Activated CD4-positive, alpha-beta T cell treated with anti-CD3 and anti-CD28 coated beads, Interleukin-2, amount 10 ng/mL, durations not matched to agents 7 days and 5 days (primary cell): ENCODE measurements at regions of chr6 and their contacts with region 1.

Region 1: GRCh38 chr6:36290661-36291620 is 21.1 kb downstream of the PNPLA1 start:
- DNase-seq: no peak
- H3K4me3 Mint-ChIP-seq: no peak overlapping the region
- H3K27ac Mint-ChIP-seq: no peak overlapping the region
- H3K4me1 Mint-ChIP-seq: peaks cover 8% of the 10 kb centered on the region
- H3K27me3 Mint-ChIP-seq: peaks cover 16% of the 10 kb centered on the region

Region 2: GRCh38 chr6:36302227-36302976 is 11.5 kb after region 1 on chr6:
- CTCF ChIA-PET with region 1: interaction called, 12 read pairs
- POLR2A ChIA-PET with region 1: no interaction called
- DNase-seq: peak; percentile 97
- H3K4me3 Mint-ChIP-seq: no peak overlapping the region
- H3K27ac Mint-ChIP-seq: no peak overlapping the region
- H3K4me1 Mint-ChIP-seq: peaks cover 6% of the 10 kb centered on the region
- H3K27me3 Mint-ChIP-seq: peaks cover 11% of the 10 kb centered on the region

Region 3: GRCh38 chr6:36386495-36387439 is 95.8 kb after region 1 on chr6:
- CTCF ChIA-PET with region 1: no interaction called
- POLR2A ChIA-PET with region 1: no interaction called
- DNase-seq: peak; percentile 21
- H3K4me3 Mint-ChIP-seq: peak overlapping the region; percentile 82
- H3K27ac Mint-ChIP-seq: peak overlapping the region; percentile 89
- H3K4me1 Mint-ChIP-seq: peaks cover 48% of the 10 kb centered on the region
- H3K27me3 Mint-ChIP-seq: peaks cover 25% of the 10 kb centered on the region